ENCODE measurements at regions of chr2 and their contacts with region 1.

Region 1: DNA sequence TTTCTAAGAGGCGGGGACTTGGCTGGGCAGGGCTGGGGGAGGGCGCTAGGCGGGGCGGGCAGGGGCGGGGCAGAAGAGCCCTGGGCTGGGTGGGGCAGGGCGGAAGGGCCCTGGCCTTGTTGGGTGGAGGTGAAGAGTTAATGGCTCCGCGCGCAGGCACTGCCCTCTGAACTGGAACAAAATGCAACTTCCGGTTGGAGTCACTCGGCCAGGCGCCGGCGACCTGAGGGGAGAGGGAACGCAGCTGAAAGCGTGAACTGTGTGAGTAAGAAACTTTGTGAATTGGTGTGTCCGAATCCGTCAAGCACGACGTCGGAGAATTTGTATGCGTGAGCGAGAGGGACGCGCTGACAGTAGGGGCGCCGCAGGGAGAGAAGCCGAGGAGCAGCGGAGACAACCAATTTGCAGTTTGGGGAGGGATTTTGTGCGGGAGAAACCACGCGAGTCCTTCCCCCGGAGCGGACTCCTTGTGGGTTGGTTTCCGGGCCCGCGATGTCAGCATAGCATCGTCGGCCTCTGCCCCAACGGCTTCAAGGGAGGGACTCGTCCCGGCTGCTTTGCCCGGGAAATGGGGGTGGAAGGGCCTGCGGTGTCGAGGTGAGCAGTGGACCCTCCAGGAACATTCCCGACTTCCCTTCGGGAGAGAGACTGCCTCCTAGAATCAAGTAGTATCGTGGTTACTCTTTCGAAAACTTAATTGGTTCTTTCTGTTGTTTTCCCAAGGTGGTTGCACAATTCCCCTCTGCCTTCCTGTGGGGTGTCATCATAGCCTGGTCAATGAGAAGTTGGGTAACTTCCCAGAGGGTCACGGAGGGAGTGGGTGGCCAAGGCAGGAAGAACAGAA is at the start of gene TANK:
- DNase-seq: peak; percentile 79 to 86
- H3K4me3 ChIP-seq: peak within 1 kb of the TSS; percentile 76
- H3K27ac ChIP-seq: peak within 1 kb of the TSS; percentile 98
- H3K4me1 ChIP-seq: peaks cover 19% of the 10 kb centered on the region
- H3K27me3 ChIP-seq: no peaks in the 10 kb centered on the region
- CTCF ChIP-seq: no peak
- total RNA-seq, gene TANK: 31.3 and 46.1 TPM in 2 replicates

Region 2: GRCh38 chr2:161063157-161063954 is 97.1 kb before region 1 on chr2:
- CTCF ChIA-PET with region 1: no interaction called
- POLR2A ChIA-PET with region 1: no interaction called
- intact Hi-C with region 1: loop called (anchors 1 kb)
- DNase-seq: peak; percentile 60 to 70
- H3K4me3 ChIP-seq: no peak overlapping the region
- H3K27ac ChIP-seq: no peak overlapping the region
- H3K4me1 ChIP-seq: peaks cover 11% of the 10 kb centered on the region; the same call in 1 of the 2 replicates
- H3K27me3 ChIP-seq: no peaks in the 10 kb centered on the region
- CTCF ChIP-seq: peak; percentile 90

Region 3: DNA sequence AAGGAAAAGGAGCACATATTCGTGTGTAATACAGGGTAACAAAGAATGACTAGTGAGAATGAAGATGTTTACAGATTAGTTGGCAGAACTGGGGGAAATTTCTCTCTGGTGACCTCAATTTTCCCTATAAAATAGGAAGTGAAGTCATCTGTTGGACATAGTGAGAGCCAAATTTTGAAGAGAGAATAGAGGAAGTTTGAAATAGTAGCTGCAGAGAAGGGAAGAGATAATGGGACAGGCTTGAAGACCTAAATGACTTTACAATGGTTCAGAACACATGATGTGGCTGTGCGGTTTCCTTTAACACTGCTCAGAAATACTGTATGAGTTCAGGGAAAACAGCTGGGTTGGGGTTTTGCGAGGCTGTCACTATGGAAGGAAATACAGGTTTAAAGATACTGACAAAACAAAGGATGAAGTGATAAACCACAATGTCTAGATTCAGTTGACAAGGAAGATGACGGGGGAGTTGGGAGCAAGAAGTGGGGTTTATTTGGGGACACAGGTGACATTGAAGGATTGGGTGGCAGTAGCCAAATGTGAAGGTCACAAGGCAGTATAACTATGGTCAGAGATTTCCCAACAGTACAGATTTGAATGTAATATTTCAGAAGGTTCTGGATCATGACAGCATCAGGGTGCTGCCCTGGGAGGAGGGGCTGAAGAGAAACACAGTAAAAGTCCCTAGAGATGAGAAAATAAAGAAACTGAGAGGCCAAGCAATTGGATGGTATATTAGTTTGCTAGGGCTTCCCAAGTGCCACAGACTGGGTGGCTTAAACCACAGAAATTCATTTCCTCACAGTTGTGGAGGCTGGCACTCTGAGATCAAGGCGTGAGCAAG is 82.9 kb before region 1 on chr2:
- CTCF ChIA-PET with region 1: no interaction called
- POLR2A ChIA-PET with region 1: no interaction called
- intact Hi-C with region 1: no loop called
- DNase-seq: no peak
- H3K4me3 ChIP-seq: no peak overlapping the region
- H3K27ac ChIP-seq: no peak overlapping the region
- H3K4me1 ChIP-seq: no peaks in the 10 kb centered on the region
- H3K27me3 ChIP-seq: no peaks in the 10 kb centered on the region
- CTCF ChIP-seq: no peak

Region 4: GRCh38 chr2:161190050-161190449 is 29.6 kb after region 1 on chr2:
- CTCF ChIA-PET with region 1: no interaction called
- POLR2A ChIA-PET with region 1: no interaction called
- intact Hi-C with region 1: no loop called
- DNase-seq: no peak
- H3K4me3 ChIP-seq: no peak overlapping the region
- H3K27ac ChIP-seq: no peak overlapping the region
- H3K4me1 ChIP-seq: no peaks in the 10 kb centered on the region
- H3K27me3 ChIP-seq: no peaks in the 10 kb centered on the region
- CTCF ChIP-seq: no peak

Measured in PC-9 (cell line).